Aorta (tissue), 5 donors: ENCODE measurements at regions of chr2 and their contacts with region 1.

Region 1: GRCh38 chr2:96260404-96261260 is 5.2 kb downstream of the TMEM127 start:
- DNase-seq: peak; percentile 68 to 75
- ATAC-seq: peak; percentile 81
- H3K4me3 ChIP-seq: no peak overlapping the region
- H3K27ac ChIP-seq: peak overlapping the region; percentile 84 to 92
- H3K4me1 ChIP-seq: peaks cover 3 to 7% of the 10 kb centered on the region in 2 donors
- H3K27me3 ChIP-seq: no peaks in the 10 kb centered on the region

Region 2: GRCh38 chr2:96145036-96145847 is 115.4 kb before region 1 on chr2 and contains the start of gene DUSP2:
- intact Hi-C with region 1: loop called in 1 of 2 experiments (anchors 5 kb)
- DNase-seq: peak; percentile 88 to 92
- ATAC-seq: peak; percentile 75
- H3K4me3 ChIP-seq: peak within 1 kb of the TSS; percentile 18 to 23
- H3K27ac ChIP-seq: peak within 1 kb of the TSS; percentile 6 to 26
- H3K4me1 ChIP-seq: no peaks in the 10 kb centered on the region
- H3K27me3 ChIP-seq: no peaks in the 10 kb centered on the region
- total RNA-seq, gene DUSP2: 5.7 to 7.5 TPM